ENCODE measurements at regions of chr13 and their contacts with region 1.

Region 1: GRCh38 chr13:52652196-52652979 is at the start of gene SUGT1:
- DNase-seq: peak; percentile 88
- H3K4me3 ChIP-seq: peak within 1 kb of the TSS; percentile 74
- H3K27me3 ChIP-seq: no peaks in the 10 kb centered on the region
- CTCF ChIP-seq: peak; percentile 75
- polyA plus RNA-seq, gene SUGT1: 28.5 and 49.6 TPM in 2 replicates

Region 2: GRCh38 chr13:52359534-52359933 is 292.9 kb before region 1 on chr13:
- CTCF ChIA-PET with region 1: no interaction called
- POLR2A ChIA-PET with region 1: no interaction called
- DNase-seq: no peak
- H3K4me3 ChIP-seq: no peak overlapping the region
- H3K27me3 ChIP-seq: no peaks in the 10 kb centered on the region
- CTCF ChIP-seq: no peak

Region 3: GRCh38 chr13:52411629-52412028 is 240.8 kb before region 1 on chr13:
- CTCF ChIA-PET with region 1: no interaction called
- POLR2A ChIA-PET with region 1: no interaction called
- DNase-seq: no peak
- H3K4me3 ChIP-seq: no peak overlapping the region
- H3K27me3 ChIP-seq: no peaks in the 10 kb centered on the region
- CTCF ChIP-seq: no peak

Region 4: GRCh38 chr13:52599848-52600603 is 52.4 kb before region 1 on chr13:
- CTCF ChIA-PET with region 1: interaction called, 6 read pairs
- POLR2A ChIA-PET with region 1: interaction called, 11 read pairs
- DNase-seq: no peak
- H3K4me3 ChIP-seq: peak overlapping the region; percentile 60
- H3K27me3 ChIP-seq: no peaks in the 10 kb centered on the region
- CTCF ChIP-seq: no peak

Region 5: GRCh38 chr13:52617070-52618060 is 35.0 kb before region 1 on chr13:
- CTCF ChIA-PET with region 1: interaction called, 11 read pairs
- POLR2A ChIA-PET with region 1: interaction called, 12 read pairs
- DNase-seq: no peak
- H3K4me3 ChIP-seq: peak overlapping the region; percentile 94
- H3K27me3 ChIP-seq: no peaks in the 10 kb centered on the region
- CTCF ChIP-seq: no peak

Region 6: GRCh38 chr13:52665325-52665724 is 12.9 kb after region 1 on chr13:
- CTCF ChIA-PET with region 1: interaction called, 33 read pairs
- POLR2A ChIA-PET with region 1: interaction called, 11 read pairs
- DNase-seq: no peak
- H3K4me3 ChIP-seq: no peak overlapping the region
- H3K27me3 ChIP-seq: no peaks in the 10 kb centered on the region
- CTCF ChIP-seq: peak; percentile 54

Region 7: GRCh38 chr13:52786747-52787146 is 134.4 kb after region 1 on chr13:
- CTCF ChIA-PET with region 1: no interaction called
- POLR2A ChIA-PET with region 1: no interaction called
- DNase-seq: no peak
- H3K4me3 ChIP-seq: no peak overlapping the region
- H3K27me3 ChIP-seq: no peaks in the 10 kb centered on the region
- CTCF ChIP-seq: no peak

Measured in BJ (cell line).